ENCODE measurements at regions of chr2 and their contacts with region 1.

Region 1: GRCh38 chr2:9474361-9474967 is at the start of gene IAH1:
- DNase-seq: no peak
- H3K4me3 ChIP-seq: peak within 1 kb of the TSS; percentile 75 to 90 (median 84)
- H3K27ac ChIP-seq: peak within 1 kb of the TSS; percentile 86 to 94 (median 91)
- H3K4me1 ChIP-seq: peaks cover 22 to 48% (median 45%) of the 10 kb centered on the region in 4 donors
- H3K27me3 ChIP-seq: no peaks in the 10 kb centered on the region
- CTCF ChIP-seq: no peak
- EP300 ChIP-seq: no peak
- POLR2A ChIP-seq: peak; percentile 22
- total RNA-seq, gene IAH1: 53.0 to 101 (median 66.8) TPM

Region 2: DNA sequence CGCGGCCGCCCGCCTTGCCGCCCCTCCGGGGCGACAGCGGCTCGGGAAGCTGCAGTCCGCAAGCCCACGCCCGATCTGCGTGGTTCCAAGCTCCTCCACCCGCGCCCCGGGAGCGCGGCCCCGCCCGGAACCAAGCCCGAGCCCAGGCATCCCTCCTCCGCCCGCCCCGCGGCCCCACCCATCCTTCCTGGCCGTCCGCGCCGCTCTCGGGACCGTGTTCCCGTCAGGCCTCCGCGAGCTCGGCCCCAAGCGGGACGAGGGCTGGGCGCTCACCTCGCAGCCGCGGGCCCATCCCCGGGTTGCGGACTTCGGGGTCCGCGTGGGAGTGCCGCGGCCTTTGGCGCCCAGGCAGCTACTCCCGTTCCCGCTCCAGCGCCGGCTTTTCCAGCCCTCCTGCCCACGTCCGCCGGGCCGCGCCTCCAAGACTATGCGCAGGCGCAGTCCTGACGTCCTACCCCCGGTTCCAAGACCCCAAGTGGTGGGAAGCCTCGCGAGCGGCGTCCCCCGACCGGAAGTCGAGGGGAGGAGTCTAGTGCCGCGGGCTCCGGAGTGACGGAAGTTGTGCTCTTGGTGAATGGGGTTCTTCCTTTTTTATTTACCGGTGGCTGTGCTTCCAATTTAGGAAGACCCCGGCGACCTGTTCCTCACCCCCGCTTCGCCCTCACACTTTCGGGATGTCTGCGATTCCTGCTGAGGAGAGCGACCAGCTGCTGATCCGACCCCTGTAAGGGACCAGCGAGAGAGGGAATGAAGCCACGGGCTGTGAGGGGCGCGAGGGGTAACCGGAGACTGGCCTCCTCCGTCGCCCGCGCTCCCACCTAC is 51.2 kb before region 1 on chr2 and contains the starts of genes CPSF3 and ITGB1BP1:
- intact Hi-C with region 1: loop called (anchors 10 kb)
- DNase-seq: peak; percentile 99
- H3K4me3 ChIP-seq: peak within 1 kb of the TSS; percentile 78 to 93 (median 92)
- H3K27ac ChIP-seq: peak within 1 kb of the TSS; percentile 93 to 95 (median 94)
- H3K4me1 ChIP-seq: peaks cover 26 to 52% (median 48%) of the 10 kb centered on the region in 4 donors
- H3K27me3 ChIP-seq: no peaks in the 10 kb centered on the region
- CTCF ChIP-seq: peak in 2 of 3 experiments; percentile 15 to 49
- EP300 ChIP-seq: no peak
- POLR2A ChIP-seq: peak; percentile 53
- total RNA-seq, gene CPSF3: 18.3 to 22.8 (median 20.7) TPM
- total RNA-seq, gene ITGB1BP1: 59.6 to 91.4 (median 66.1) TPM

Region 3: DNA sequence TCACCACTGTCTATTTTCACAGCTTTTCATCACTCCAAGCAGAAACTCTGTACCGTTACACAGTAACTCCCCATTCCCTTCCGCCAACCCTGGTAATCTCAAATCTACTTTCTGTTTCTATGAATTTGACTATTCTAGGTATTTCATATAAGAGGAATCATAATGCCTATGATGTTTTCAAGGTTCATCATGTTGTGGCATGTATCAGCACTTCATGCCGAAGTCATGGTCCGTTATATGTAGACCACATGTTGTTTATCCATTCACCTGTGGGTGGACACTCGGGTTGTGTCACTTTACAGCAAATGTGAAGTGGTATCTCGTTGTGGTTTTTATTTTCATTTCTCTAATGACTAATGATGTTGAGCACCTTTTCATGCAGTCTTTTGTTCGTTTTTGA is 29.4 kb before region 1 on chr2:
- intact Hi-C with region 1: no loop called
- DNase-seq: no peak
- H3K4me3 ChIP-seq: no peak overlapping the region
- H3K27ac ChIP-seq: no peak overlapping the region
- H3K4me1 ChIP-seq: no peaks in the 10 kb centered on the region
- H3K27me3 ChIP-seq: no peaks in the 10 kb centered on the region
- CTCF ChIP-seq: no peak
- EP300 ChIP-seq: no peak
- POLR2A ChIP-seq: no peak

Region 4: GRCh38 chr2:9555297-9556141 is 81.1 kb after region 1 on chr2 and contains the start of gene ADAM17:
- intact Hi-C with region 1: loop called (anchors 5 kb)
- DNase-seq: peak; percentile 99
- H3K4me3 ChIP-seq: peak within 1 kb of the TSS; percentile 74 to 96 (median 83)
- H3K27ac ChIP-seq: peak within 1 kb of the TSS; percentile 96 to 99 (median 98)
- H3K4me1 ChIP-seq: peaks cover 56 to 76% (median 74%) of the 10 kb centered on the region in 4 donors
- H3K27me3 ChIP-seq: no peaks in the 10 kb centered on the region
- CTCF ChIP-seq: peak; percentile 25 to 68 (median 31)
- EP300 ChIP-seq: peak; percentile 54
- POLR2A ChIP-seq: peak; percentile 82
- total RNA-seq, gene ADAM17: 12.9 to 17.7 (median 14.9) TPM

Region 5: GRCh38 chr2:9630749-9631483 is 156.5 kb after region 1 on chr2 and contains the start of gene YWHAQ:
- intact Hi-C with region 1: loop called (anchors 10 kb)
- DNase-seq: peak; percentile 100
- H3K4me3 ChIP-seq: peak within 1 kb of the TSS; percentile 71 to 84 (median 81)
- H3K27ac ChIP-seq: peak within 1 kb of the TSS; percentile 92 to 98 (median 96)
- H3K4me1 ChIP-seq: peaks cover 39 to 48% (median 47%) of the 10 kb centered on the region in 4 donors
- H3K27me3 ChIP-seq: no peaks in the 10 kb centered on the region
- CTCF ChIP-seq: no peak
- EP300 ChIP-seq: no peak
- POLR2A ChIP-seq: peak; percentile 97
- total RNA-seq, gene YWHAQ: 223 to 239 (median 230) TPM

Measured in esophagus muscularis mucosa (tissue), 4 donors.